ENCODE measurements at regions of chr17 and their contacts with region 1.

Region 1: GRCh38 chr17:7931709-7932482 is at the starts of genes CNTROB and TRAPPC1:
- DNase-seq: peak; percentile 100
- H3K4me3 Mint-ChIP-seq: peak within 1 kb of the TSS; percentile 98
- H3K27ac Mint-ChIP-seq: peak within 1 kb of the TSS; percentile 99
- H3K4me1 Mint-ChIP-seq: peaks cover 42% of the 10 kb centered on the region
- H3K27me3 Mint-ChIP-seq: no peaks in the 10 kb centered on the region
- total RNA-seq, gene CNTROB: 52.4 and 54.5 TPM in 2 replicates
- total RNA-seq, gene TRAPPC1: 150 and 159 TPM in 2 replicates

Region 2: DNA sequence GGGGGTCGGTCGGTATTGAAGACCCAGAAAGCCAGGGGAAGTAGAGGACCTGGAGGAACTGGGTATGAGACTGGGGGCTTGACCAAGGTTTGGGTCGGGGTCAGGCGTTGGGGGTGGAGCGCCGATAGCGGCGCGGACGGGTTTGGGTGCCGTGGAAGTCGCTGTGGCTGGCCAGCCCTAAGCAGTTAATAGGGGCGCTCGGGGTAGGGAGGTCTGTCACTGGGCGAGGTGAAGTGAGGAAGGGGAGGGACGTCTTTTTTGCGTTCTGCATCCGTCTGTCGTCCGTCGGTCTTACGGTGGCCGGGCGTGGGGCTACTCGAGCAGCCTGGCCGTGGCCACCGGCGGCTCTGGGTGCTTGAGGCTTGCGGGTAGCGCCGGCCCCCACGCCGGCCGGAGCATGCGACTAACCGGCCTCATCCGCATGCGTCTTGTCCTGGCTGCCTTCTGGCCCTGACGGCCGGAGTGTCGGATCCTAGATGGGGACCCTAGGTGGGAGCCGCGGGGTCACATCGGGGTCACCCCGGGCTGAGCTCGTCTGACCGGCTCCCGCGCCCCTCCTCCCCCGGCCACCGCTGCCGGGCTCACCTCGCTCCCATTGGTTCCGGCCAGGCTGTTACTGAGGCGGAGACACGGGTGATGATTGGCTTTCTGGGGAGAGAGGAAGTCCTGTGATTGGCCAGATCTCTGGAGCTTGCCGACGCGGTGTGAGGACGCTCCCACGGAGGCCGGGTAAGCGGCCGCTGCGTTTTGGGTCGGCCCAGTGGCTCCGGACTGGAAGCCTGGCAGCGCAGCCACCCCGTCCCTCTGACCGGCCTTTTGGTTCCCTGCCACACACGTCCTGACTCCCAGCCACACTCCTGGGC is 87.4 kb before region 1 on chr17:
- intact Hi-C with region 1: loop called (anchors 2 kb)
- DNase-seq: peak; percentile 96
- H3K4me3 Mint-ChIP-seq: peak overlapping the region; percentile 99
- H3K27ac Mint-ChIP-seq: peak overlapping the region; percentile 100
- H3K4me1 Mint-ChIP-seq: peaks cover 37% of the 10 kb centered on the region
- H3K27me3 Mint-ChIP-seq: peaks cover 2% of the 10 kb centered on the region

Region 3: GRCh38 chr17:7856883-7857723 is 74.8 kb before region 1 on chr17 and contains the start of gene NAA38:
- intact Hi-C with region 1: loop called (anchors 1 kb)
- DNase-seq: peak; percentile 98
- H3K4me3 Mint-ChIP-seq: no peak within 1 kb of the TSS
- H3K27ac Mint-ChIP-seq: no peak within 1 kb of the TSS
- H3K4me1 Mint-ChIP-seq: peaks cover 16% of the 10 kb centered on the region
- H3K27me3 Mint-ChIP-seq: no peaks in the 10 kb centered on the region
- total RNA-seq, gene NAA38: 45.2 and 47.5 TPM in 2 replicates

Region 4: GRCh38 chr17:7887482-7888183 is 44.3 kb before region 1 on chr17:
- intact Hi-C with region 1: loop called (anchors 5 kb)
- DNase-seq: peak; percentile 95
- H3K4me3 Mint-ChIP-seq: no peak overlapping the region
- H3K27ac Mint-ChIP-seq: no peak overlapping the region
- H3K4me1 Mint-ChIP-seq: peaks cover 9% of the 10 kb centered on the region
- H3K27me3 Mint-ChIP-seq: no peaks in the 10 kb centered on the region

Region 5: GRCh38 chr17:7897773-7898172 is 34.1 kb before region 1 on chr17:
- intact Hi-C with region 1: no loop called
- DNase-seq: no peak
- H3K4me3 Mint-ChIP-seq: no peak overlapping the region
- H3K27ac Mint-ChIP-seq: peak overlapping the region; percentile 81
- H3K4me1 Mint-ChIP-seq: peaks cover 18% of the 10 kb centered on the region
- H3K27me3 Mint-ChIP-seq: no peaks in the 10 kb centered on the region

Region 6: DNA sequence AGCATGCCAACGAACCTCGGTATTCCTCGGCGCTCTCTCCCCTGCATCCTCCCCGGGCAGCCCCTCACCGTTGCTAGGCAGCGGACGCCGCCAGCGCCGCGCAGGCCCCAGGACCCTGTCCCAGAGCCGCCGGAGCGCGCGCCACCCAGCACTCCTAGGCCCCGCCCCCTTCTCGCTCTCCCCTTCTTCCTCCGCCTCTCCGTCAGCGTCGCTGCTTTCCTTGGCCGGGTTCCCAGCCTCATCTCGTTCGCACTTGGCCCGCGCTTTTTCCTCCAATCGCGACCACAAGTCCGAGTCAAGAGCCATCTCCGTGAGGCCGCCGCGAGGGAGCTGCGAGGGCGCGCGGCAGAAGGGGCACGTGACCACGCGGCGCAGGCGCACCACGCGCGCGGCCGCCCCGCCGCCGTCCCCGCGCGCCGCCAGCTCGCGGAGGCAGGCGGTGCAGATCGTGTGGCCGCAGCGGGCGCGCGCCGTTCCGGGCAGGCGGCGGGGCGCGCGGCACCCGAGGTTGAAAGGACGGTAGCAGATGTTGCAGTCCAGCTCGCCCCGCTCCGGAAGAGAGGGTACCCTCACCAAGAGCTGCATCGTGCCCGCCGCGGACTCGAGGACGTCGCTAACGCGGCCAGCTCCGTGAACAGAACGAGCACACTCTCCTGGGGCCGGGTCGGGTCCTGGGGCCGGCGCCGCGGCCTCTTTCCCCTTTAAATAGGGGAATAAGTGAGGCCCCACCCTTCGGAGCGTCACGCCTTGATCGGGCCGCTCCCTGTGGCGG is 16.1 kb before region 1 on chr17 and contains the start of gene RNF227:
- intact Hi-C with region 1: loop called (anchors 1 kb)
- DNase-seq: peak; percentile 94
- H3K4me3 Mint-ChIP-seq: peak within 1 kb of the TSS; percentile 97
- H3K27ac Mint-ChIP-seq: peak within 1 kb of the TSS; percentile 97
- H3K4me1 Mint-ChIP-seq: peaks cover 26% of the 10 kb centered on the region
- H3K27me3 Mint-ChIP-seq: no peaks in the 10 kb centered on the region
- total RNA-seq, gene RNF227: 6.2 and 6.5 TPM in 2 replicates

Region 7: GRCh38 chr17:7989781-7990655 is 58.1 kb after region 1 on chr17:
- intact Hi-C with region 1: loop called (anchors 1 kb)
- DNase-seq: peak; percentile 98
- H3K4me3 Mint-ChIP-seq: peak overlapping the region; percentile 79
- H3K27ac Mint-ChIP-seq: peak overlapping the region; percentile 87
- H3K4me1 Mint-ChIP-seq: peaks cover 19% of the 10 kb centered on the region
- H3K27me3 Mint-ChIP-seq: peaks cover 22% of the 10 kb centered on the region

Region 8: GRCh38 chr17:8288336-8289102 is 356.6 kb after region 1 on chr17 and contains the start of gene RANGRF:
- intact Hi-C with region 1: loop called (anchors 10 kb)
- DNase-seq: peak; percentile 97
- H3K4me3 Mint-ChIP-seq: peak within 1 kb of the TSS; percentile 99
- H3K27ac Mint-ChIP-seq: peak within 1 kb of the TSS; percentile 96
- H3K4me1 Mint-ChIP-seq: peaks cover 37% of the 10 kb centered on the region
- H3K27me3 Mint-ChIP-seq: no peaks in the 10 kb centered on the region
- total RNA-seq, gene RANGRF: 57.5 and 66.3 TPM in 2 replicates

Measured in activated CD4-positive, alpha-beta T cell treated with anti-CD3 and anti-CD28 coated beads, Interleukin-2, amount 10 ng/mL, durations not matched to agents 24 days and 14 days (primary cell).